ENCODE measurements at regions of chr19 and their contacts with region 1.

Region 1: GRCh38 chr19:23686621-23687423 is at the start of gene ZNF675:
- DNase-seq: peak; percentile 96
- ATAC-seq: peak; percentile 99
- total RNA-seq, gene ZNF675: 3.7 TPM

Region 2: DNA sequence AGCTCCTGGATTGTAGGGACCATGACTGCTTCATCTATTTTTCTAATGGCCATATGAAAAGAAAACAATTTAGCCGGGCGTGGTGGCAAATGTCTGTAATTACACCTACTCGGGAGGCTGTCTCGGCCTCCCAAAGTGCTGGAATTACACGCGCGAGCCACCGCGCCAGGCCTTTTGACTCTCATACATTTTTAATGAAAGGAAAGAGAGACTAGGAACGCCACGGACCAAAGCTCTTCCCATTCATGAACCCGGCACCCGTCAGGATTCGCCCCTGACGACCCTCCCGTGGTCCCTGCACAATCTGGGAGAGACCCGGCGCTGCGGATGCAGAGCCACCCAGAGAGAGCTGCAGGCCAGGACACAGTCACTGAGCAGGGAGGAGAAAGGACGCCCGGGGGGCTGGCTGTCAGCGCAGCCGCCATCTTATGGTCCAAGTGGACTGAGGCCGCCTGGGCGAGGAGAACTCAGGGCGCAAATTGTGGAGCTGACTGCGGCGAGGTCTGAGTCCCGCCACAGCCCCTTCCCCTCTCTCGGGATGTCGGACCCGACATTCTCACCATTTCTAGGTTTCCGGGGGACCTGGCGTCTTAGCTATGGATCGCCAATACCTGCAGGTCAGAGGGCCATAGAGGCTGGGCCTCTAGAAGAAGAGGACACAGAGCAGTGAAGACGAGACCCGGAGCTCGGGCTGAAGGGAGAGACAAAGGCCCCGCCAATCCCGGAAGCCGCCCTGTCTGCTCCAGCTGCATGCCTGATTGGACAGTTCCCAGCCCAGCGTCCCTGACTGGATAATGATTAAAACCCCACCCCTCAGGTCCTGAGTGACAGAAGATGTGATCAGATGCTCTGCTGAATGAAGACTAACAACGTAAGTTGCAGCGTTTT is 71.6 kb after region 1 on chr19 and contains the start of gene ZNF681:
- intact Hi-C with region 1: loop called (anchors 10 kb)
- DNase-seq: peak; percentile 93
- ATAC-seq: peak; percentile 95
- total RNA-seq, gene ZNF681: 0.30 TPM

Region 3: GRCh38 chr19:23932878-23933277 is 246.1 kb after region 1 on chr19:
- intact Hi-C with region 1: no loop called
- DNase-seq: no peak
- ATAC-seq: no peak

Region 4: DNA sequence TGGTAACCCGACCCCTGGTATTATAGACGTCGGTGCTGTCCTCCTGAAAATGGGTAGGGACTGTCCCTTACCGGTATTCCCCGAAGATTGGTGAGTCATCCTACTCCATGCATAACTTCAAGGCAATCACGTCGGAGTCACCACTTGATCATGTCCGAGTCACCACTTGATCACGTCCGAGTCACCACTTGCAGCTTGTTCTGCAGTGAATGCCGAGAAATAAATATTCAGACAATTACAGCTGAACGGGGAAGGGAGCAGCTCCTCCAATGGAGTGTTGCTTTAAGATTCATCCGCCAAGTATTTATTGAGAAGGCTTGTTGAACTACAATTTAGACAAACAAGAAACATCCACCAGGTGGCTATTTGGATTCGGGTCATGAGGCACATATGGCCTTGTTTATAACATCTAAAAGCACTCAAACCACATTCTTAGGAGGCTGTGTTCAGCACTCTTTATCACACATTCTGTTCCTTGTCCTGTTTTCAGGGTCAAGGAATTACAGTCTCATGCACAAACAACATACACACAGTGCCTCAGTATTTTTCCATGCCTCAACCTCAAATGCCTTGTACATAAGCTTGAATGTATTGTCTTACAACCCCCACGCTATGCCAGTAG is 270.9 kb after region 1 on chr19:
- intact Hi-C with region 1: no loop called
- DNase-seq: no peak
- ATAC-seq: no peak

Region 5: DNA sequence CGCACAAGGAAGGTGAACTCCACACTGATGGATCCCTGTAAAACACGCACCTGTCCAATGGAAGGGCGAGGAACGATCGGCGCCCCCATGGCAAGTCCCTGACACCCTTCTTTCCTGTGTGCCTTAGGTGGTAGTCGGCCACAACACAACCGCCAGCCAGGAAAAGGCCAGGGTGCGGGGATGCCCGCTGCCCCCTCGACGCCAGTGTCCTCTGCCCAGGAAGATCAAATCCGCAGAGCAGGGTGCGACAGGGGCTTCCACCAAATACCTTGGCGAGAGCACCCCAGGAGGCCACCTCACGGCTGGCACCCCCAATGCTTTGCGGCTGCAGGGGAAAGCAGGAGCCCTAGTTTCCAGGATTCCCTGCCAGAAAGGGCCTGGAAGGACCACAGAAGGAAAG is 491.4 kb after region 1 on chr19:
- intact Hi-C with region 1: no loop called
- DNase-seq: no peak
- ATAC-seq: no peak